ENCODE measurements at regions of chr1 and their contacts with region 1.

Region 1: DNA sequence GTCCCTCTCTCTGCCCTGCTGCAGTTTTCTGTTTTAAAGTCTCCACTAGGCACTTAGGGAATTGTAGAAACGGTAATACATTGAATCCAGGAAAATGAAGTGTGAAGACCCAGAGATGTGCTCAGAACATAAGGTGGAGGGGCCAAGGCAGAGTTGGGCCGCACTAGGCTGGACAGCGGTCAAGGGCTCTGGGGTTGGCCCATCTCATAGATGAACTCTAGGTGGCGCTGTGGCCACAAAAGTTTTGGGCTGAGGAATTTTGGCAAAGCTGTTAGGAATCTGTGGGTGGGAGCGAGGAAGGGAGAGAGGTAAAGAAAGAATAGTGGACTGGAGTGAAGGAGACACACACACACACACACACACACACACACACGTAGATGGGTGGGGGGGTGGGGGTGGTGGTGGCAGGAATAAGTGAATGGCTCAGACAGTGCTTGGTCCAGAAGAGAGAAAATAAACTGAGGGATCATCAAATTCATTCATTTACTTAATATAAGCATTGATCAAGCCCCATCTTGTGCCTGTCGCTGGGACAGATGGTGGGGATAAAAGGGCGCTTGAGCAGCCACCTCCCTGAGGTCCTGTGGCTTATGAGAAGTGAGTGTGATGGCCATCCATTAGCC is 258.5 kb downstream of the TRABD2B start:
- DNase-seq: peak; percentile 72
- H3K4me3 Mint-ChIP-seq: no peak overlapping the region
- H3K27ac Mint-ChIP-seq: no peak overlapping the region
- H3K4me1 Mint-ChIP-seq: no peaks in the 10 kb centered on the region
- H3K27me3 Mint-ChIP-seq: peaks cover 33% of the 10 kb centered on the region
- CTCF ChIP-seq: peak; percentile 66

Region 2: DNA sequence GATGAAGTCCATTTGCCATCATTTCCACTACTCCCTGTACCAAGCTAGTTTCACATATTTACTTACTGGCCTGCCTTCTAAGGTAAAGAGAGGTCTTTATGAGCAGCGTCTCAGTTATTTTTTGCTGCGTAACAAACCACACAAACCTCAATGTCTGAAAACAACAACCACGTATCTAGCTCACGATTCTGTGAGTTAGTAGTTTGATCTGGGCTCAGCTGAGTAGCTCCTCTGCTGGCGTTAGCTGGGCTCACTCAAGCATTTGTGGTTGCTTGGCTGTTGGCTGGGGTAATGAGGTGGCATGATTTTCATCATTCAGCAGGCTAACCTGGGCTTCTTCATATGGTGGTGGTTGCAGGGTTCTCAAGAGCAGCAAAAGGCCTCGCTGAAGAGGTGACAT is 75.4 kb before region 1 on chr1:
- CTCF ChIA-PET with region 1: no interaction called
- intact Hi-C with region 1: no loop called
- DNase-seq: no peak
- H3K4me3 Mint-ChIP-seq: no peak overlapping the region
- H3K27ac Mint-ChIP-seq: no peak overlapping the region
- H3K4me1 Mint-ChIP-seq: no peaks in the 10 kb centered on the region
- H3K27me3 Mint-ChIP-seq: no peaks in the 10 kb centered on the region
- CTCF ChIP-seq: no peak

Region 3: GRCh38 chr1:47931394-47931793 is 192.7 kb after region 1 on chr1:
- CTCF ChIA-PET with region 1: no interaction called
- intact Hi-C with region 1: loop called (anchors 1 kb)
- DNase-seq: peak; percentile 55
- H3K4me3 Mint-ChIP-seq: no peak overlapping the region
- H3K27ac Mint-ChIP-seq: no peak overlapping the region
- H3K4me1 Mint-ChIP-seq: peaks cover 9% of the 10 kb centered on the region
- H3K27me3 Mint-ChIP-seq: peaks cover 17% of the 10 kb centered on the region
- CTCF ChIP-seq: peak; percentile 24

Region 4: GRCh38 chr1:48003741-48004511 is 265.3 kb after region 1 on chr1:
- CTCF ChIA-PET with region 1: no interaction called
- intact Hi-C with region 1: loop called (anchors 5 kb)
- DNase-seq: peak; percentile 24
- H3K4me3 Mint-ChIP-seq: no peak overlapping the region
- H3K27ac Mint-ChIP-seq: no peak overlapping the region
- H3K4me1 Mint-ChIP-seq: no peaks in the 10 kb centered on the region
- H3K27me3 Mint-ChIP-seq: peaks cover 8% of the 10 kb centered on the region
- CTCF ChIP-seq: no peak

Region 5: DNA sequence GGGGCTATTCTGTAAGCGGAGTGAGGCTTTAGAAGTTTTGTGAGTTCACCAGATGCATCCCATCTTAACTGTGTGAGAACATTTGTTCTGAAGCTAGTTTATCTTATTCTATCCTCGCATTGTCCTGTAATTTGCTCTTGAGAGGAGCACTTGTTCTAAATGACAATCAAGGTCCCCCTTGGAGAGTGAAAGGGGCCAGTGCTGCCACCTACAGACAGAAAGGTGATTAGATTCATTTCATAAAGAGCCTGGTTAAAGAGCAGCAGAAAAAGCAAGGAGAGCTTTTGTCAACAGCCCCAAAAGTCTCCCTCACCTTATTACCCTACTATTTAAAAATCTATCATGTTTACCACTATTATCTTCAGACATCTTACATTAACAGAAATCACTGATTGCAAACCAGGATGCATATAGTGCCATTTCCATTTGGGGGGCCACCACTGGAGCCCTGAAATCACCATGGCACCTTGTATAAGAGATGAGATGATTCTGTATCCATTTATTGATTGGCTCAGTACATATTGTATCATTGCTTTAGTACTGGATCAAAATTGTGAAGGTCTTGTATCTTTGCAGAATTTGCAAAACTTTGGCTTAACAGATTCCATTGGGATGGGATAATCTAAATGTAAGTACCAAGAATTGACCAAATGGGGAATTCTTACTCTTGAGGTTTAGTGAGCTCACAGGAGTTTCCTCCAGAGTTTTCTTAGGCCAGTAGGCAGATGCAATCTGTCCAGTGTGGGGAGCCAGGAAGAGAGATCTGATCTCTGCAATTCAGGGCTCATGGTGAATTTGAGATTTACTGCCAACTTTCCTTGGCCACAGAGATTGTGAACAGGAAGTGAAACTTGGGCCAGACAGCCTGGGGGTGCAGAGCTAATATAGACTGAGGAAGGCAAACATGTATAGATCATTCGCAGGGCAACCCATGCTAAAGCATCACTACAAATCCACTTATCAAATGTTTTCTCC is 322.8 kb after region 1 on chr1:
- CTCF ChIA-PET with region 1: no interaction called
- intact Hi-C with region 1: loop called (anchors 1 kb)
- DNase-seq: peak; percentile 62
- H3K4me3 Mint-ChIP-seq: no peak overlapping the region
- H3K27ac Mint-ChIP-seq: no peak overlapping the region
- H3K4me1 Mint-ChIP-seq: peaks cover 19% of the 10 kb centered on the region
- H3K27me3 Mint-ChIP-seq: peaks cover 32% of the 10 kb centered on the region
- CTCF ChIP-seq: no peak

Measured in Calu3 (cell line).